SK-N-SH (cell line): ENCODE measurements at regions of chr21 and their contacts with region 1.

Region 1: GRCh38 chr21:34351786-34352241 is 12.0 kb upstream of the KCNE2 start:
- DNase-seq: peak; percentile 66
- H3K4me3 ChIP-seq: no peak overlapping the region; a peak in 1 of 4 replicates
- H3K27ac ChIP-seq: no peak overlapping the region
- H3K4me1 ChIP-seq: no peaks in the 10 kb centered on the region; a peak in 1 of 4 replicates
- H3K27me3 ChIP-seq: no peaks in the 10 kb centered on the region; the same call in 1 of the 2 replicates
- CTCF ChIP-seq: peak; percentile 66
- EP300 ChIP-seq: no peak
- RAD21 ChIP-seq: peak; percentile 95

Region 2: GRCh38 chr21:34073032-34073869 is 278.6 kb before region 1 on chr21 and contains the starts of genes MRPS6 and SLC5A3:
- CTCF ChIA-PET with region 1: interaction called, 13 read pairs
- POLR2A ChIA-PET with region 1: interaction called, 4 read pairs
- DNase-seq: peak; percentile 94
- H3K4me3 ChIP-seq: peak within 1 kb of the TSS; percentile 75 to 89
- H3K27ac ChIP-seq: peak within 1 kb of the TSS; percentile 61 to 94; a peak in 3 of 4 replicates
- H3K4me1 ChIP-seq: peaks cover 18 to 27% of the 10 kb centered on the region in 2 experiments
- H3K27me3 ChIP-seq: no peaks in the 10 kb centered on the region
- CTCF ChIP-seq: no peak
- EP300 ChIP-seq: peak in 1 of 2 experiments; percentile 74; a peak in 2 of 4 replicates
- RAD21 ChIP-seq: peak; percentile 27
- polyA plus RNA-seq, gene MRPS6: 26.8 and 69.2 TPM in 2 replicates
- polyA plus RNA-seq, gene SLC5A3: 3.0 and 3.2 TPM in 2 replicates

Region 3: DNA sequence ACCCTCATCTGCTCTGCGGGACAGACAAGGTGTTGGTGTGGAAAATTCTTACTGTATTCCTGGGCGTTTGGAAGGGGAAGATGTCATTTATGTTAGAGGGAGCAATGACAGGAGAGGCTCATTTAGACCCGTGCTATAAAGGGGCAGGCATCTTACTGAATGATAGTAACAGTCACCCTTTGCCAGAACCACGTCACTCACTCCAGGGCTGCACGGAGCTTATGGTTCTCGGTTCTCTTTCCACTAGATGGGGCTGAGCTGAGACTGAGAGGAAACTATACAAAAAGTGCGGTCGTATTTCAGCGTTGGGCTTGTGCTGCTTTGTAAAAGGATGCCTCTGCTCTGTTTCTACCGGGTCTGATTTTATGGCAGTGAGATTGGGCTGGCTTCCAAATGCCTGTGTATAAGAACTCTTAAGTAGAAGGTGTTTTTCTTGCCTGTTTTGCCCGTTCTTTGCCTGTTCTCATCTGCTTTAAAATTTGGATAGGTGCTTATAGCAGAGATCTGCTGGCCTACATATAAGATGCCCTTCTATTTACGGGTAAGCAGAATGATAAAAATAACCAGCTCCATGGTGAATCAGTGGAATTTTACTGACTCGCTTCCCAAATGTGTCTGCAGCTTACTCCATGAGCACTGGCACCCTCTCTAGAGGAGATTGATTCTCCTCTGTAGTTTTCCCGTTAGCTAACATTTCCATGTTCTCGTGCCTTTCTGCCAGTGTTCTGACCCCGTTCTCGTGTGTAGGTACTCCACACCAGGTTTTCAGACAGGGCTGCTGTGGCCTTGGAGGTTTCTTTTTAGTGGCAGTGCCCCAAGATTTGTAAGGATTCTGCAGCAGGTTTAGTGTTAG is 222.5 kb before region 1 on chr21:
- CTCF ChIA-PET with region 1: interaction called, 15 read pairs
- POLR2A ChIA-PET with region 1: no interaction called
- DNase-seq: peak; percentile 49
- H3K4me3 ChIP-seq: peak overlapping the region; percentile 24 to 54
- H3K27ac ChIP-seq: peak overlapping the region; percentile 87 to 95
- H3K4me1 ChIP-seq: peaks cover 27 to 45% of the 10 kb centered on the region in 2 experiments
- H3K27me3 ChIP-seq: no peaks in the 10 kb centered on the region
- CTCF ChIP-seq: peak; percentile 60
- EP300 ChIP-seq: no peak
- RAD21 ChIP-seq: peak; percentile 59

Region 4: DNA sequence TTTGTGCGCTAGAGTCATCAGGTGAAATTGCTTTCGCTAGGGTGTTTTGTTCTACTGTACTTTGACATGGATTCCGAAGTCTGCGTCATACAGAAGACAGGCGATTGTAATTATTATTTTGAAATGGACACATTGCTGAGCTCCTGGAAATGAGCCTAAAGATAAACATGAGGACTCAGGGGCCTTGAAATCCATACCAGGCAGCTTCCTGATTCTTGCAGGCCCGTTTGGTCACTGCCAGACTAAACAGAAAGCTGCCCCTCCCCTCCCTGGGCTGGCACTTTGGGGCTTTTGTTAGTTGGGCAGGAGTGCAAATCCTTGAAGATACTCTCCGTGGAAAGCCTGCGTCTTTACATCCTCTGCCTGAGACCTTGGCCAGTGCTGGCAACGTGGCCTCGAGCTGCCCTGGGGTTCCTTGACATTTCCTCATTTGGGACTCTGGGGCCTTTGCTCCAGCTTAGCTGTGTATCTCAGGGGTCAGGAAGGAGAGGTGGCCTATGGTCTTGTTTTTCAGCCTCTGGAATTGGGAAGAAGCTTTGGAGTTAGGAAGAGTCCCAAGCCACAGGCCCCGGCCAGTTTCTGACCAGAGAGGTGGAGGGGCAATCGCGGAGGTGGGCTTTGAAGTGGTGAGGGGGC is 14.9 kb before region 1 on chr21:
- CTCF ChIA-PET with region 1: interaction called, 18 read pairs
- POLR2A ChIA-PET with region 1: no interaction called
- DNase-seq: no peak
- H3K4me3 ChIP-seq: no peak overlapping the region
- H3K27ac ChIP-seq: no peak overlapping the region
- H3K4me1 ChIP-seq: no peaks in the 10 kb centered on the region; a peak in 1 of 4 replicates
- H3K27me3 ChIP-seq: no peaks in the 10 kb centered on the region; the same call in 1 of the 2 replicates
- CTCF ChIP-seq: no peak
- EP300 ChIP-seq: no peak
- RAD21 ChIP-seq: no peak

Region 5: GRCh38 chr21:34367321-34367935 is 15.6 kb after region 1 on chr21:
- CTCF ChIA-PET with region 1: interaction called, 15 read pairs
- POLR2A ChIA-PET with region 1: no interaction called
- DNase-seq: peak; percentile 45
- H3K4me3 ChIP-seq: peak overlapping the region in 1 of 2 experiments; percentile 27; a peak in 1 of 4 replicates
- H3K27ac ChIP-seq: no peak overlapping the region
- H3K4me1 ChIP-seq: no peaks in the 10 kb centered on the region
- H3K27me3 ChIP-seq: no peaks in the 10 kb centered on the region; the same call in 1 of the 2 replicates
- CTCF ChIP-seq: peak; percentile 82
- EP300 ChIP-seq: no peak
- RAD21 ChIP-seq: peak; percentile 55